ENCODE measurements at regions of chr1 and their contacts with region 1.

Region 1: DNA sequence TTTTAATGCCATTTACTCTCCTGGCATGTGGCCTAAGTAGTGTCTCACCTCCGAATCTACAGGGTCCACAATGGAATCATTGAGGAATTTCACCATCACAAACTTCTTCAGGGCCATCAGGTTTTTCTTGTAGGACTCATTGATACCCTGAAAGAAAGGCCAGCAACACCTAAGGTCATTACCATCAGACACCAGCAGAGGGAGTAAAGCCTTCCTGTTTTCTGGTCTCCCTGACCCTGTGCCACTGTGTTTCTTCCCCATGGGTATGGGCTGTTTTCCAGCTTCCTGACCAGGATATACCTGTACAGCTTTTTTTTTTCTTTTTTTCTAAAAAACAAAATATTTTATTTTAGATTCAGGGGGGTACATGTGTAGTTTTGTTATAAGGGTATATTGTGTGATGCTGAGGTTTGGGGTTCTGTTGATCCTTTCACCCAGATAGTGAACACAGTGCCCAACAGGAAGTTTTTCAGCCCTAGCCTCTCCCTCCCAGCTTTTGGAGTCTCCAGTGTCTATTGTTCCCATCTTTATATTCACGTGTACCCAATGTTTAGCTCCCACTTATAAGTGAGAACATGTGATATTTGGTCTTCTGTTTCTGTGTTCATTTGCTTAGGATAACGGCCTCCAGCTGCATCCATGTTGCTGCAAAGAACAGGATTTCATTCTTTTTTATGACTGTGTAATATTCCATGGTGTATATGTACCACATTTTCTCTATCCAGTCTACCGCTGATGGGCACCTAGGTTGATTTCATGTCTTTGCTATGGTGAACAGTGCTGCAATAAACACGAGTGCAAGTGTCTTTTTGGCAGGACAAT is 18.3 kb downstream of the PPT1 start:
- DNase-seq: peak; percentile 79
- H3K4me3 Mint-ChIP-seq: no peak overlapping the region
- H3K27ac Mint-ChIP-seq: no peak overlapping the region
- H3K4me1 Mint-ChIP-seq: peaks cover 13% of the 10 kb centered on the region
- H3K27me3 Mint-ChIP-seq: no peaks in the 10 kb centered on the region
- CTCF ChIP-seq: peak; percentile 65

Region 2: GRCh38 chr1:40064797-40065499 is 13.8 kb before region 1 on chr1:
- CTCF ChIA-PET with region 1: interaction called, 10 read pairs
- POLR2A ChIA-PET with region 1: interaction called, 7 read pairs
- intact Hi-C with region 1: no loop called
- DNase-seq: no peak
- H3K4me3 Mint-ChIP-seq: no peak overlapping the region
- H3K27ac Mint-ChIP-seq: no peak overlapping the region
- H3K4me1 Mint-ChIP-seq: peaks cover 13% of the 10 kb centered on the region
- H3K27me3 Mint-ChIP-seq: no peaks in the 10 kb centered on the region
- CTCF ChIP-seq: no peak

Region 3: GRCh38 chr1:40096977-40097782 is 18.5 kb after region 1 on chr1 and contains the start of gene PPT1:
- CTCF ChIA-PET with region 1: interaction called, 18 read pairs
- POLR2A ChIA-PET with region 1: interaction called, 4 read pairs
- intact Hi-C with region 1: no loop called
- DNase-seq: peak; percentile 70
- H3K4me3 Mint-ChIP-seq: peak within 1 kb of the TSS; percentile 87
- H3K27ac Mint-ChIP-seq: peak within 1 kb of the TSS; percentile 37
- H3K4me1 Mint-ChIP-seq: peaks cover 22% of the 10 kb centered on the region
- H3K27me3 Mint-ChIP-seq: peaks cover 5% of the 10 kb centered on the region
- CTCF ChIP-seq: peak; percentile 17
- total RNA-seq, gene PPT1: 55.4 and 56.4 TPM in 2 replicates